CD4-positive, alpha-beta T cell (primary cell): ENCODE measurements at regions of chr11 and their contacts with region 1.

Region 1: GRCh38 chr11:33736148-33736809 is at the start of gene CD59:
- DNase-seq: peak; percentile 79 to 98 (median 90)
- ATAC-seq: peak; percentile 85
- H3K4me3 ChIP-seq: peak within 1 kb of the TSS; percentile 64
- H3K4me3 Mint-ChIP-seq: peak within 1 kb of the TSS; percentile 94
- H3K27ac ChIP-seq: peak within 1 kb of the TSS; percentile 20 to 52
- H3K27ac Mint-ChIP-seq: peak within 1 kb of the TSS; percentile 81
- H3K4me1 ChIP-seq: peaks cover 31% of the 10 kb centered on the region
- H3K4me1 Mint-ChIP-seq: peaks cover 43% of the 10 kb centered on the region
- H3K27me3 ChIP-seq: no peaks in the 10 kb centered on the region
- H3K27me3 Mint-ChIP-seq: no peaks in the 10 kb centered on the region
- CTCF ChIP-seq: no peak
- total RNA-seq, gene CD59: 35.2 to 37.8 TPM

Region 2: DNA sequence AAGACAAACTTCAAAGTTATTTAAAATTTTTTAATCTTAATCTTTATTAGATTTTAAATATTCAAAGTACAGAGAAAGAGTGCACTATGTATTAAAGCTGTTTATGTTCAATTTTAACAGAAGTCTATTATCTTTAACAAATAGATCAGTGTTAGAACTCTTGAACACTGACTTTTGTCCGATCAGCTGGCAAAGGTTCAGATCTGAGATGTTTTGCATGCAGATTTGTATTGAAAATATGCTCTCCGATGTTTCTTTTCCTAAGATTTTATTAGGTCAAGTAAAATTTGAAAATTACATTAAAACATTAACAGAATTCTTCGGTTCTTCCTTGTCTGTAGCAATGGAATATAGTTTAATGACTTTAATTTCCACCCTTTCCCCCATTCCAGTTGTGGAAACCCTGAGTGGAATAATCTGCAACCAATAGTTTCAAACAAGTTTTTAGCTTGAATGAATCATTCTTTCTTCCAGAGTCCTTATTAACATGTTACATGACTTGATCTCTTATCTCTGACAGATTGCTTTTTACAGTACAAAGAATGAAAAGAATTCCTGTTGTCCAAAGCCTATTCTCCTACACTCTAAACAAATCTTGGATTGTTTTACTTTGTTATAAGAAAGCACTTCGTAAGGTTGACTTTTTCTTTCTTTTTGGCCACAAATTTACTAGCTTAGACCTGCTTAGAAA is 708.3 kb before region 1 on chr11:
- CTCF ChIA-PET with region 1: no interaction called
- POLR2A ChIA-PET with region 1: no interaction called
- intact Hi-C with region 1: loop called in 1 of 2 experiments (anchors 10 kb)
- DNase-seq: no peak
- ATAC-seq: no peak
- H3K4me3 ChIP-seq: no peak overlapping the region
- H3K4me3 Mint-ChIP-seq: no peak overlapping the region
- H3K27ac ChIP-seq: no peak overlapping the region
- H3K27ac Mint-ChIP-seq: no peak overlapping the region
- H3K4me1 ChIP-seq: no peaks in the 10 kb centered on the region
- H3K4me1 Mint-ChIP-seq: no peaks in the 10 kb centered on the region
- H3K27me3 ChIP-seq: no peaks in the 10 kb centered on the region
- H3K27me3 Mint-ChIP-seq: no peaks in the 10 kb centered on the region
- CTCF ChIP-seq: no peak

Region 3: GRCh38 chr11:33700425-33701271 is 35.6 kb before region 1 on chr11 and contains the start of gene C11orf91:
- CTCF ChIA-PET with region 1: interaction called, 3 read pairs
- POLR2A ChIA-PET with region 1: interaction called, 3 read pairs
- intact Hi-C with region 1: loop called (anchors 1 to 5 kb)
- DNase-seq: peak; percentile 84 to 98 (median 94)
- ATAC-seq: peak; percentile 93
- H3K4me3 ChIP-seq: peak within 1 kb of the TSS; percentile 68
- H3K4me3 Mint-ChIP-seq: peak within 1 kb of the TSS; percentile 95
- H3K27ac ChIP-seq: no peak within 1 kb of the TSS
- H3K27ac Mint-ChIP-seq: peak within 1 kb of the TSS; percentile 64
- H3K4me1 ChIP-seq: peaks cover 14% of the 10 kb centered on the region
- H3K4me1 Mint-ChIP-seq: peaks cover 33% of the 10 kb centered on the region
- H3K27me3 ChIP-seq: no peaks in the 10 kb centered on the region
- H3K27me3 Mint-ChIP-seq: peaks cover 10% of the 10 kb centered on the region
- CTCF ChIP-seq: no peak
- total RNA-seq, gene C11orf91: 0.45 TPM in 1 of 2 experiments, not detected in the other

Region 4: DNA sequence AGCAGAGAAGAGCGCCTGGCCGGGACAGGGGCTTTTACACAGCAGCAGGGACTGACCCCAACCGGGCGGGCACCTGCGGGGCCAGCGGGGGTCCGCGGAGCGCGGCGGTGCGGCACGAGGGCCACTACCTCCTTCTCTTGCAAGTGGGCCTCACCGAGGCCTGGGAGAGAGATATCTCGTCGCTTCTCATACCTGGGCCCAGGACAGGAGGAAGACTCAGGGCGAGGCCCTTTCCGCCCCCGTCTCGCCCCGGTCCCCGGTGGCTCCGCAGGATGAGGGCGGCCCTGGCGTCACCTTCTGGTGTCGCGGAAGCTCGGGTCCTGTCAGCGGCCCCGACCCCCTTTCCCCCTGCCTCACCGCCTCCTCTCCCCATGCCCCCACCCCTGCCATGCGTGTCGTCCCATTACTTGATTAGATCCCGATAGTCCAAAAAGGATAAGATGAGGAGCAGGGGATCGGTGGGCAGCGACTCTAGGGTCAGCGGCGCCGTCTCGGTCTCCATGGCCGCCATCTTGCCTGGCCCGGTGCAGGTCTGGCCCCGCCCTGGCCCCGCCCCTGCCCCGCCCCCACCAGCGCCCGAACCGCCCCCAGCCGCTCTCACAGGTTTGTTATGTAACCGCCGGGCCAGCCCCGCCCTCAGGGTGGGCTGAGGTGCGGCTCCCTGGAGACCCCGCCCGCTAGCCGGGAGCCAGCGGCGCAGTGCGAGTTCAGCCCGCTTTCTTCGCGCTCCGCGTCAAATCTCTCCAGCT is 37.9 kb after region 1 on chr11 and contains the start of gene FBXO3:
- CTCF ChIA-PET with region 1: no interaction called
- POLR2A ChIA-PET with region 1: interaction called, 16 read pairs
- intact Hi-C with region 1: loop called in 1 of 2 experiments (anchors 2 kb)
- DNase-seq: peak; percentile 78 to 95 (median 86)
- ATAC-seq: peak; percentile 86
- H3K4me3 ChIP-seq: peak within 1 kb of the TSS; percentile 73
- H3K4me3 Mint-ChIP-seq: peak within 1 kb of the TSS; percentile 97
- H3K27ac ChIP-seq: peak within 1 kb of the TSS; percentile 64 to 75
- H3K27ac Mint-ChIP-seq: peak within 1 kb of the TSS; percentile 97
- H3K4me1 ChIP-seq: peaks cover 41% of the 10 kb centered on the region
- H3K4me1 Mint-ChIP-seq: peaks cover 61% of the 10 kb centered on the region
- H3K27me3 ChIP-seq: peaks cover 0 to 7% of the 10 kb centered on the region in 2 experiments
- H3K27me3 Mint-ChIP-seq: peaks cover 8% of the 10 kb centered on the region
- CTCF ChIP-seq: no peak
- total RNA-seq, gene FBXO3: 62.0 to 63.4 TPM

Region 5: DNA sequence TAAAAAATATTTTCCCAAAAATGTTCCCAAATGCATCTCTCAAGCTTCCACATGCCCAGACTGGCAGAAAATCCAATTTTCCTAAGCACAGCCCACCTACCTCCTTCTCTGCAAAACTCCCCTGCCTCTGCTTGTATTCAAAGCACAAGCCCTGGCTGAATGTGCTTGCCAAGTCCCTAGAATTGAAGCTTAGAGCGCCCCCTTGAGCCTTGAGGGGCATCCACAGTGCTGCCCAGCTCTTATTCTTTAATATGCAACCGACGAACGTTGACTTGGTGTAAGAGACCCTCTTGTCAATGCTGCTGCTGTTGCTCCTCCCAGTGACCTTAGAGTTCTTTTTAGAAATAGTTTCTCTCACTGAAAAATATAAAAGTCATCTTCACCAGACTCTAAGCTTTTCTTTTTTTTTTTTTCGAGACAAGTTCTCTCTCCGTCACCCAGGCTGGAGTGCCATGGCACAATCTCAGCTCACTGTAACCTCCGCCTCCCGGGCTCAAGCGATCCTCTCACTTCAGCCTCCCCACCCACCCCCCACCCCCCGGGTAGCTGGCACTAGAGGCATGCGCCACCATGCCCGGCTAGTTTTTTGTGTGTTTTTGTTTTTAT is 251.8 kb after region 1 on chr11:
- CTCF ChIA-PET with region 1: no interaction called
- POLR2A ChIA-PET with region 1: no interaction called
- intact Hi-C with region 1: no loop called
- DNase-seq: peak; percentile 49 to 88 (median 63)
- ATAC-seq: peak; percentile 86
- H3K4me3 ChIP-seq: no peak overlapping the region
- H3K4me3 Mint-ChIP-seq: no peak overlapping the region
- H3K27ac ChIP-seq: no peak overlapping the region
- H3K27ac Mint-ChIP-seq: no peak overlapping the region
- H3K4me1 ChIP-seq: no peaks in the 10 kb centered on the region
- H3K4me1 Mint-ChIP-seq: peaks cover 6% of the 10 kb centered on the region
- H3K27me3 ChIP-seq: peaks cover 0 to 2% of the 10 kb centered on the region in 2 experiments
- H3K27me3 Mint-ChIP-seq: peaks cover 9% of the 10 kb centered on the region
- CTCF ChIP-seq: peak; percentile 64